PC-9 (cell line): ENCODE measurements at regions of chr11 and their contacts with region 1.

Region 1: GRCh38 chr11:59142530-59143507 is at the start of gene FAM111A:
- DNase-seq: peak; percentile 91 to 94
- H3K4me3 ChIP-seq: peak within 1 kb of the TSS; percentile 72
- H3K27ac ChIP-seq: peak within 1 kb of the TSS; percentile 61
- H3K4me1 ChIP-seq: peaks cover 37% of the 10 kb centered on the region
- H3K27me3 ChIP-seq: no peaks in the 10 kb centered on the region
- CTCF ChIP-seq: no peak; the same call in 1 of the 2 replicates
- total RNA-seq, gene FAM111A: 57.8 and 95.3 TPM in 2 replicates

Region 2: DNA sequence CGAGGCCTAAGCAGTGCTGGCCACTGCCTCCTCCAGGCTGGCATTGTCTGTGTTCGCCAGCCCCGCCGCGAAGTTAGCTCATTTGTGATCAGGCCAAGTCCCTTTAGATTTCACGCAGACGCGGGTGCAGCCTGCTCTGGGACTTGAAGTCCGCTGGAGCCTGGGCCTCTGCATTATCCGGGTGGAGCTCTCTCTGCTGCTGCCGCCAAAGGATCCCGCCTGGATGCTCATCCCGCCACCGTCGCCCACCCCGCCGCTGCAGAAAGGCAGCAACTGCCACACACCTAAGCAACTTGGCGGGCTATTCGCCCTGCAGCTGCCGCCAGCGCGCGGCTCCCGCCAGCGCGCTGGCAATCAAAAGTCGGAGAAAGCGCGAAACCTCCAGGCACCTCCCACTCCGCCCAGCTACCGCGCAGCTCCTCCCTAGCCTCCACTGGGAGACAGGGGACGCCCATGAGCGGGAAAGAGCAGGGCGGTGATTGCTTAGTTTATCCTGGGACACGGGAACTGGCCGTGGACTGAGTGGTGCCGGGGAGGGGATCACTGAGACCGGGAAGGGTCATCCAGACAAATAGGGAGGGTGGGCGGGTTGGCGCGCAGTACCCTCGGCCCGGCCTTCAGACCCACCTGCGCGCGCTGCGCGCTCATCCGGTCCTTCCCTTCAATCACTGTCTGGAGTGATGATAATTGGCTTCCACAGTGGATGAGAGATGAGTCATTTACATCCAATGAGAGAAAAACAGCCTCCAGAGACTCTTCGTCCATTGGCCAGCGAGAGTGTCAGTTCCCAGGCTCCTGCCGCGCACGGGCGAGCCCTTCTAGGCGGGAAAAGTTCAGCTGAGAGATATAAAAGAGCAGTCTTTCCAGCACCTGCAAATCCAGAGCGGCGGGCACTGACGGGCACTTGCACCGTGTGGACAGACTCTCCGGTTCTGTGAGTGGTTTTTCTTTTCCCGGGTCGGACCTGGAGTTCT is 36.2 kb before region 1 on chr11 and contains the start of gene FAM111B:
- CTCF ChIA-PET with region 1: interaction called, 4 read pairs
- POLR2A ChIA-PET with region 1: interaction called, 4 read pairs
- intact Hi-C with region 1: loop called (anchors 1 kb)
- DNase-seq: peak; percentile 90 to 94
- H3K4me3 ChIP-seq: peak within 1 kb of the TSS; percentile 60
- H3K27ac ChIP-seq: no peak within 1 kb of the TSS
- H3K4me1 ChIP-seq: peaks cover 5% of the 10 kb centered on the region; the same call in 1 of the 2 replicates
- H3K27me3 ChIP-seq: peaks cover 9% of the 10 kb centered on the region; the same call in 1 of the 2 replicates
- CTCF ChIP-seq: no peak
- total RNA-seq, gene FAM111B: 8.5 and 12.0 TPM in 2 replicates

Region 3: DNA sequence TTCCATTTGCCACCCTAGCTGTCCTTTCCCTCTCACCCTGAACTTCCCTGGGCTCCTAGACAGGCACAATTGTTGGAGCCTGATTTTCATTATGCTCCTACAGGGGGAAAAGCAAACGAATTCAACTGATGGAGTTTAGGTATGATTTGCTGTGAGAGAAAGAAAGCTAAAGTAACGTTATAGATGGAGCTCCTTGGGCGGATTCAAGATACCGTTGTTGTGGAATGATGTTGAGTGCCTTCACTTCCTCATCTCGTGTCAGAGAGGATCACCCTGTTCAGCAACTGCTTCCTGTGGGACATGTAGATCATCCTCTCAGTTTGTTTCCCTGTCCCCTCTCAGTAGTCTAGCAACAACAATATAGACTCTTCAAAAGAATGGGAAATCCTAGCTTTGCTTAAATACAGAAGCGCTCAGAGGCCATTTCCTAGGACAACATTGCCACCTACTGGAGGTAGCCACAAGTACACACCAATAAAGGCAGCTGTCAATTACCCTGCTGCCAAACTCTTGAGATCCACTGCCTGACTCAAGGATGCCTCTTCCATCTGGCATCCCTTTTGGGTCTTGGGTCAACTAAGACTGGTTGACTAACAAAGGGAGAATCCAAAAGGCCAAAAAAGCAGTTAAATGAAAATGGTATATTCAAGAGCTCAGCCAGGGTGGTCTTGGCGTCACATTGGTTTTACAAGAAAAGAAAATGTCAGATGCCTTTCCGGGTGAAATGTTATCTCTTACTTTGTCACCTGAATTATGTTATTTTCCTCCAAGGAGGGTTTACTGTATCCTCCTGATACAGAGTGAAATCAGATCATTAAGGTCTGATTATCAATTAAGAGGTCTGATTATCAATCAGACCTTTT is 15.6 kb after region 1 on chr11:
- CTCF ChIA-PET with region 1: interaction called, 11 read pairs
- POLR2A ChIA-PET with region 1: interaction called, 3 read pairs
- intact Hi-C with region 1: no loop called
- DNase-seq: peak; percentile 53 to 59
- H3K4me3 ChIP-seq: no peak overlapping the region
- H3K27ac ChIP-seq: no peak overlapping the region
- H3K4me1 ChIP-seq: no peaks in the 10 kb centered on the region
- H3K27me3 ChIP-seq: 0 out of 2 replicates have a peak, but pooled peaks cover 15% of the 10 kb centered on the region
- CTCF ChIP-seq: peak; percentile 95